Motor neuron (in vitro differentiated cells): ENCODE measurements at regions of chr20 and their contacts with region 1.

Region 1: DNA sequence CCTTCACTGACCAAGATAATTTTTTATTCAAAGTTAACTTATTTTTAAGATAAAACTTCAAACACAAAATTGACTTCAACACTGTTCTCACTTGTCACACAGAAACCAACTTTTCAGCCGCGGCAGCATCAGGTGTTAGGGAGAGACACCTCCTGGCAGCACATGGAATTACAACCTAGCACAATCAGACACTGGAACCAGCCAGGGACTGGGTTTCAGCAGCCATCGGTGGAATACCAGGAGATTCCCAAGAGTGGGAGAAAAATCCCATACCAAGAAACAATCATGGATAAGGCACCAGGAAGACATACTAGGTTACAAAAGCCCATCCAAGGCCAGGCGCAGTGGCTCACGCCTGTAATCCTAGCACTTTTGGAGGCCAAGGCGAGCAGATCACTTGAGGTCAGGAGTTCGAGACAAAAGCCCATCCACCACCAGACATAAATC is 70.0 kb downstream of the SNX5 start:
- ATAC-seq: peak in 3 of 8 experiments; percentile 50 to 82 (median 55)
- H3K4me3 ChIP-seq: no peak overlapping the region
- H3K27ac ChIP-seq: no peak overlapping the region
- H3K4me1 ChIP-seq: peaks cover 17 to 21% of the 10 kb centered on the region in 2 donors

Region 2: GRCh38 chr20:17536944-17537444 is 361.6 kb before region 1 on chr20:
- in situ Hi-C with region 1: loop called in 1 of 9 experiments (anchors 25 kb)
- ATAC-seq: peak; percentile 88 to 99 (median 96)
- H3K4me3 ChIP-seq: no peak overlapping the region
- H3K27ac ChIP-seq: no peak overlapping the region
- H3K4me1 ChIP-seq: peaks cover 7 to 10% of the 10 kb centered on the region in 2 donors

Region 3: DNA sequence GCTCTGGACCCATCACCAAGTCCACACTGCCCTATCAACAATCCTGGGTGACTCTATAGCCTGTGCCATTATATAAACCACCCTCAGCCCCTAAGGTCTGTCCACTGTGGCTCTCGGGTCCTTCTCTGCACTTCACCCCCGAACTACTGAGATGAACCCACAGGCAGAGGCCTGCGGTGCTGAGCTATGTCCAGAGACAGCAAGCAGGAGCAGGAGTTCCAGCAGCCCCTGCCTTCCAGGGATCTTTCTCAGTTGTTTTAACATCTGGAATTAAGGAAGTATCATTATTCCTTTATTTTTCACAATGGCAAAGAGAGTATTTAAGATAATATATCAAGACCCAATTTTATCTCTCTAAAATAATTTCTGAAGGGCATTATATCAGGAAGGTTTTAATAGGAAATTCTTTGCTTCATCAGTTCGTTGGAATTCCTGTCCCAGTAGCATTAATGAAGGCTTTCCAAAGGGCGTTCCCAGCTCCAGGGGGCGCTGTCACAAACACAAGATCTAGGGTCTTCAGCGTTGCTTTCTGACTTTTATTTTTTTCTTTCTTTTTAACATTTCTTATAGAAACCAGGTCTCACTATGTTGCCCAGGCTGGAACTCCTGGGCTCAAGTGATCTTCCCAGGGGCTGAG is 243.8 kb before region 1 on chr20:
- in situ Hi-C with region 1: loop called in 3 of 9 experiments (anchors 25 kb)
- ATAC-seq: no peak
- H3K4me3 ChIP-seq: no peak overlapping the region
- H3K27ac ChIP-seq: no peak overlapping the region
- H3K4me1 ChIP-seq: no peaks in the 10 kb centered on the region

Region 4: GRCh38 chr20:18213002-18213401 is 314.4 kb after region 1 on chr20:
- in situ Hi-C with region 1: no loop called
- ATAC-seq: no peak
- H3K4me3 ChIP-seq: no peak overlapping the region
- H3K27ac ChIP-seq: no peak overlapping the region
- H3K4me1 ChIP-seq: no peaks in the 10 kb centered on the region

Region 5: DNA sequence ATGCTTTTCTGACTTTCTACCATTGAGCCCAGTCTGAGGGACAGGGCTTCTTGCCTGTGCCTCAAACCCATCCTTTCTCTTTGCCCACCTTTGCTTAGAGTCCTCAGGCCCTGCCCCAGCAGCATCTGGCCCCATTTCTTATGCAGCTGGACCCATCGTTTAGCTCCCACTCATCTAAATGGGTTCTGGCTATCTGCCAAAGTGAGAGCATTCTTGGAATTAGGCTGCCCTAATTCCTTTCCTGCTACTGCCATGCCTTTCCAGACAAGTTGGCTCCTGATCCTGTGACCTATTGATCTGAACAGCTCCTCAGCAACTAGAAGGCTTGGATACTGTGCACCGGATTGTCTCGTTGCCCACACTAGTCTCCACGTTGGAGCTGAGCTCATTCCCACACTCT is 545.3 kb after region 1 on chr20:
- in situ Hi-C with region 1: no loop called
- ATAC-seq: no peak
- H3K4me3 ChIP-seq: no peak overlapping the region
- H3K27ac ChIP-seq: no peak overlapping the region
- H3K4me1 ChIP-seq: no peaks in the 10 kb centered on the region